Dorsolateral prefrontal cortex (tissue), 120 donors: ENCODE measurements at regions of chr3 and their contacts with region 1.

Region 1: DNA sequence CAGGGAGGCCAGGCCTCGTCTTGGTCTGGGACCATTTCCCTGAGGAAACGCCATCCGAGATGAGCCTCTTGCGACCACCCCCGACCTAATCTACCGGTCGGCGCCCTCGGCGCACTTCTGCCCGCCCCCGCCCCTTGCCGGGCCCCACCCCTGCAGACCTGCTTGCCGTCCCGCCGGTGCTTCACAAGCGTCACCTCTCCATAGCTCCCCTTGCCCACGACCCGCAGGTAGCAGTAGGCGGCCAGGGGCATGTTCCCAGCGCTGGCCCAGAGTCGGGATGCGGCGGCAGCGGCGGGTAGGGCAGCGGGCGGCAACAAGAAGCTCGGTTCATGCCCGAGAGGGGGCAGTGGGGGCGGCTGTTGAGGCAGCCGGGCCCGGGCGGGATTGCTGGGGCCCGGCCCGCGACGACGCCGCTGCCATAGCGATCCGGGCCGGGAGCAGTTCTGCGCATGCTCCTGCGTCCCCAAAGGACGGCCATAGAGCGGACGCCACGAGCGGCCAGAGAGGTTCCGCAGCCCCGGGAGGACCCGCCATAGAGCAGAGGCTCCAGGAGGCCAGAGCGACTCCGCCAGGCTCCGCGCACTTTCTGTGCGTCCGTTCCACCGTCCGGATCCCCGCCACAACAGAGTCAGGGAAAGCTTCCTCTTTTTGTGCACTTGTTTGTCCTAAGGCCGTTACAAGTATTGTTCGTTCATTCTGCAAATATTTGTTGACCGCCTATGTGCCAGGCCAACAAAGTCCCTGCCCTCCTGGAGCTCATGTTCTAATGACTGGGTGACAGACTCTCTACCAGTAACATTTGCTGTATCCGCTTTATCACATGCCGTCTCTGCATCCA is at the start of gene NEK4:
- DNase-seq: peak; percentile 86 to 96 (median 92)
- H3K4me3 ChIP-seq: peak within 1 kb of the TSS; percentile 63 to 98 (median 89)
- H3K27ac ChIP-seq: peak within 1 kb of the TSS; percentile 20 to 93 (median 80)
- H3K27me3 ChIP-seq: no peaks in the 10 kb centered on the region
- CTCF ChIP-seq: peak in 44 of 56 donors; percentile 8 to 68 (median 39)
- total RNA-seq, gene NEK4: 34.0 to 82.9 (median 51.4) TPM

Region 2: GRCh38 chr3:52705688-52706686 is 64.7 kb before region 1 on chr3 and contains the starts of genes GLT8D1 and SPCS1:
- intact Hi-C with region 1: loop called (anchors 5 kb)
- DNase-seq: peak; percentile 77 to 93 (median 87)
- H3K4me3 ChIP-seq: peak within 1 kb of the TSS; percentile 48 to 100 (median 96)
- H3K27ac ChIP-seq: peak within 1 kb of the TSS; percentile 24 to 96 (median 90)
- H3K27me3 ChIP-seq: no peaks in the 10 kb centered on the region
- CTCF ChIP-seq: peak in 29 of 56 donors; percentile 2 to 59 (median 27)
- total RNA-seq, gene GLT8D1: 31.5 to 63.2 (median 47.2) TPM
- total RNA-seq, gene SPCS1: 50.3 to 110 (median 78.8) TPM